ENCODE measurements at regions of chrX and their contacts with region 1.

Region 1: DNA sequence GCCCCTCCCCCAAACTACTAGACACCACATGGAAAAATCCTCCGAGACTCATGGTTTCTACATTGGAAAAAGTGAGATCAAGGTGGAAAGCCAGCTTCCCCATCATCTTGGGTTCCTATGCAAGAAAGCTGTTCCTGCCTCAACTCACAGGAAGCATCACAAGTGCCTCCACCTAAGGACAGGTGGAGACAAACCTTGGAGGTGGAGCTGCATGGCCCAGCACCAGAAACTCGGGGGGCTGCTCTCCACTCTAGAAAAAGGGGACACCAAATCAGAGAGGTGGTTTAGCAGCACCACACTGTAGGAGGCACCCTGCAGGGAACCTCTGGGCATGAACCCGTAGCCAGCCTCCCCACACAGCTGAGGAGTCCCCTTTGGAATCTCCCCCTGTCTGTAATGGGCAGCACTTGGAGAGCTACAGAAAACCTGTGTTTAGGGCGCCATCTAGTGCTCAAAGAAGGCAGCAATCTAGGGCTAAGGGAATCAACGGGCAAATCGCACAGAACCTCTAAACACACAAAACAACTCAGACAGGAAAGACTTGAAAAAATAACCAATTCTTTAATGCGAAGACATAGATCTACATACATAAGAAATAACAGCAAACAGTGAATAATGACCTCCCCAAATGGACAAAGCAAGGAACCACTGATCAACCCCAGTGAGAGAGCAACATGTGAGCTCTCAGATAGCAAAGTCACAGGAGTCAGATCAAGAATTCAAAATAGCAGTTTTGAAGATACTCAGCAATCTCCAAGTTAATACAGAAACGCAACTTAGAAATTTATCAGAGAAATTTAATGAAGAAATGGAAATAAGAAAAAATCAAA is 37.0 kb upstream of the ZBTB33 start:
- DNase-seq: no peak
- H3K4me3 ChIP-seq: no peak overlapping the region
- H3K27ac ChIP-seq: no peak overlapping the region
- H3K4me1 ChIP-seq: no peaks in the 10 kb centered on the region
- H3K27me3 ChIP-seq: no peaks in the 10 kb centered on the region
- CTCF ChIP-seq: peak; percentile 31 to 63 (median 36)
- EP300 ChIP-seq: no peak
- POLR2A ChIP-seq: no peak

Region 2: DNA sequence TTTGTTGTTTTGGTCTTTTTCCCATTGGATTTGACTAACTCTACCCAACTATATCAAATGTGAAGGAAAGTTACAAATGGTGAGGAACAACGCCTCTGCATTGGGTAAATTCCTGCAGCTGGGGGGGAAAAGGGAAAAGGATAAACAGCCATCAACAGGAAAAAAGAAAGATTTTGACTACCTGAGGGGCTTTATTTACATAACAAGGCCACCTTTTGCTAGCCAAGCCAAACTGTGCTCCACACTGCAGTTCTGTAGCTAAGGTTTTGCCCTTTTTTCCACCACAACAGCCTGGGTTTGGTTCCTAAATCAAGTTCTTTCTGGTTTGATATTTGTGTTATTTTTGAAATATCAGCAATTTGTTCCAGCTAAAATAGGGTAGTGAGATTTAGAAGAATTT is 176.9 kb before region 1 on chrX:
- intact Hi-C with region 1: loop called (anchors 10 kb)
- DNase-seq: no peak
- H3K4me3 ChIP-seq: no peak overlapping the region
- H3K27ac ChIP-seq: no peak overlapping the region
- H3K4me1 ChIP-seq: no peaks in the 10 kb centered on the region
- H3K27me3 ChIP-seq: no peaks in the 10 kb centered on the region
- CTCF ChIP-seq: no peak
- EP300 ChIP-seq: no peak
- POLR2A ChIP-seq: no peak

Region 3: GRCh38 chrX:120372667-120373370 is 159.2 kb after region 1 on chrX:
- intact Hi-C with region 1: no loop called
- DNase-seq: no peak
- H3K4me3 ChIP-seq: no peak overlapping the region
- H3K27ac ChIP-seq: no peak overlapping the region
- H3K4me1 ChIP-seq: no peaks in the 10 kb centered on the region
- H3K27me3 ChIP-seq: no peaks in the 10 kb centered on the region
- CTCF ChIP-seq: no peak
- EP300 ChIP-seq: no peak
- POLR2A ChIP-seq: no peak